Right ventricle myocardium superior (tissue), 1 donor: ENCODE measurements at regions of chr1 and their contacts with region 1.

Region 1: GRCh38 chr1:168572633-168573032 is 3.8 kb upstream of the XCL1 start:
- DNase-seq: no peak
- ATAC-seq: no peak

Region 2: DNA sequence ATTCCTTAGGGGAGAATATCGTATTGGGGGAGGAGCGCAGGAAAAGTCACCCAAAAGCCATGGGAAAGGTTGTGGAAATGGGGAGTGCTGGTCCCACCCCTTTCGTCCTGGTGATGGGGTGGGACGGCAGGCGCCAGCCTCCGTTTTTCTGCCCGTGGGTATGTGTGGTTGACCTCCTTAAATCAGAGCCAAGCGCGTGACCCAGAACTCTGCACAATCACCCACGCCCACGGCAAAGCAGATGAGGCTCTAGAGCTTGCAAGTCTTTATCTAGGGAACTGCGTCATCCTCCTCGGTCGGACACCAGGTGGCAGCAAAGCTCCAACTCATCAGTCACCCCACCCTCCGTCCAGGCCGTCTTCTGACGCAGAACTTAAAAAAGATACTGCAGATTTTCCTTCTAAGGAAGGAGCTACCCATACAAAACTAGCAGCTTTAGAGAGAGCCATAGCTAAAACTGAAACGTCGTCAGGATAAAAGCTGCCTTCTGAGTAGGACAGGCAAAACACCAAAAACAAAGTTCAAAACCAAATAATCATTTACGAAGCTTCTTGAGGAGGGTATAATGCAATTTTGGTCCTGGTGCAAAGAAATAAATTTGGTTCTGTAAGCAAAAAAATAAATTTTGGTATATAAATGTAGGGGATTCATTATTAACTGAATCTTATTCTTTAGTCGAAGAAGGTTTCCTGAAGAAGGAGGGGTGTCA is 229.9 kb before region 1 on chr1:
- intact Hi-C with region 1: loop called (anchors 2 kb)
- DNase-seq: peak; percentile 92
- ATAC-seq: peak; percentile 99

Region 3: GRCh38 chr1:168428063-168428731 is 144.4 kb before region 1 on chr1:
- intact Hi-C with region 1: no loop called
- DNase-seq: peak; percentile 59
- ATAC-seq: peak; percentile 82

Region 4: DNA sequence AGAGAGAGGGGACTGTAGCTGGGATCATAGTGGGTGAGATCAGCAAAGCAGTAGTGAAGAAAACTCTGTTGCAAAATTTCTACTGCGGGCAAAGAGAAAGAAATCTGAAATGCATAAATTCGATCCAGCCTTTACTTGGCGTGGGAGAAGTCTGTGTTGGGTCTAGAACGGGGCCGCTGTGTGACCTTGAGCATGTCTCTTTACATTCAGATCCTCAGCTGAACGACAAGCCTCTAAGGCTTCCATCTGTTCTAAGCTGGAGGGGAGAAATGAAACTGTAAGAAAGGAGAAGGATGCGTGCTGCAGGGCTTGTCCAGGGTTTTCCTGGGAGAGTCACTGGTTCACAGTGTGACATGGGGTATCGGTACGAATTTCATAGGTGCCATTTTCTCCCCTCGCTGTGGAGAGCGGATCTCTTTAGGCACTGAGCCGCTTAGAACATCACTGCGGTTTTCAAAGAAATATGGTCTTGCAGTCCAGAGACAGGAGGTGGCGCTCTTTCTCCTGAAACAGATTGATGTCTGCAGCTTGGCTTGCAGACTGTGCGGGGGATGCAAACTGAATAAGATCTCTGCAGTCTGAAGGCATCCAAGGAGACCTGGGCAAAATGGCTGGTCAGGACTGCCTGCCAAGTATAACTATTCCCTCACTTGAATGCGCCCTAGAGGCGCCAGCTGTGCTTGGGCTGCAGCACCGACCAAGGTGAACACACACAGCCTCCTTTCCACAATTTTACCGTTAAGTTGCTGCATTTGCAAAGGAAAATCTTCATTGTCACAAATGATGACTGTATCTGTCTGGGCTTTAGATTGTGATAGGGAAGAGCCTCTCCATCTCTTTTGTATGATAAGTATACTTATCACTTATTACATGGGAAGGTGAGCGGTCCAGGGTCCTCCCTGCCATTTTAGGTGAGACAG is 132.9 kb before region 1 on chr1:
- intact Hi-C with region 1: loop called (anchors 10 kb)
- DNase-seq: peak; percentile 64
- ATAC-seq: peak; percentile 95

Region 5: GRCh38 chr1:168643152-168643551 is 70.5 kb after region 1 on chr1:
- intact Hi-C with region 1: no loop called
- DNase-seq: no peak
- ATAC-seq: no peak

Region 6: DNA sequence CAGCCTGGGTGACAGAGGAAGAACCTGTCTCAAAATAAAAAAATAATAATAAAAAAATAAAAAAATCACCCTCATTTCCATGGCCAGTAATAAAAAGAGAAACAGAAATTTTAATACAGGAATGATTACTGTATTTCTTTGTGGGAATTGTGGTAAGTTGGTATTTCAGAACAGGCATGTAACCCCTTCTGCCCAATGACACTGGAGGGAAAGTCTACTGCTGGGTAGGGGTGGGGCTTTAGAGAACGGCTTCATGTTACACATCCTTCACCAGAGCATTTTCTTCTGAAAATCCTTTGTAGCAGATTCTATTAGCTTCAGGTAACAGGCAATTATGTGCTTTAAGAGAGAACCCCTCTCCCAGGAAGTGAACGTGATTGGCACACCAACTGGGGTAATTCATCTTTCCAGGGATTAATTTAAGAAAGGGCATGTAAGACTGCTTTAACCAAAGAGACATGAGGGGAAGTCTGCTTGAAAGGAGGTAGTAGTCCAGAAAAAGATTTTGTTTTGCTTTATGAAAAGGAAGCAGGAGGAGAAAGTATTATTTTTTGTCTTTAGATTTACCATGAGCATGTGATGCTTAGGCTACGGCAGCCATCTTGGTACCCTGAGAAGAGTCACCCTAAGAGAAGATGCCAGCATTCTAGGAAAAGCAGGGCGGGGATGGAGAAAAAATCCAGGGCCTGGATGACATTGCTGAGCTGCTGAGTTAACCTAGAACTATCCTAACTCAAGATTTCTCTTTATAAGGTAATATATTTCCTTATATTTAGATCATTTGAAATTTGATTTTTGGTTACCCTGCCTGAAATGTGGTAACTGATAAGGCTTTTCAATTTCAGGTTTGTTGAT is 214.1 kb after region 1 on chr1:
- intact Hi-C with region 1: no loop called
- DNase-seq: no peak
- ATAC-seq: no peak